Endothelial cell of umbilical vein (primary cell): ENCODE measurements at regions of chr2 and their contacts with region 1.

Region 1: GRCh38 chr2:227238238-227239237 is 74.1 kb downstream of the COL4A3 start:
- DNase-seq: peak; percentile 62
- H3K4me3 ChIP-seq: no peak overlapping the region
- H3K27ac ChIP-seq: no peak overlapping the region
- H3K4me1 ChIP-seq: no peaks in the 10 kb centered on the region
- H3K27me3 ChIP-seq: no peaks in the 10 kb centered on the region
- CTCF ChIP-seq: peak; percentile 86 to 95
- POLR2A ChIP-seq: no peak

Region 2: DNA sequence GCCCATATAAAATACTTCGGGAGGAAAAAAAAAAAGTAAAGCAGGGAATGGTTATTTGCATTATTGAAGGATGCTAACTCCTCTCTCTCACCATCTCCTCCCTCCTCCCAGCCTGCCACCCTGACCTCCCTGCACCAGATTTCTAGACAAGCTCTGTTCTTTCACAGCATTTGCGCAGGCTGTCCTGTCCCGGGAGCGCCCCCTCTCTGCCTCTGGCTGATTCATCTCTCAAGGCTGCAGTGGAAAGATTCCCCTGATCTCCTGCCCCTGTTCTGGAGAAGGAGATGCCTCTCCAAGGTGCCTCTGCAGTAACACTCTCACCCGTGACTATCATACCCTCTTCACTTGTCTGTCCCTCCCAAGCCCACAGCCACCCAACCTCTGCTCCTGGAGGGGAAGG is 113.0 kb before region 1 on chr2:
- CTCF ChIA-PET with region 1: interaction called, 104 read pairs
- POLR2A ChIA-PET with region 1: no interaction called
- dilution Hi-C with region 1: no loop called
- intact Hi-C with region 1: loop called (anchors 1 kb)
- DNase-seq: no peak
- H3K4me3 ChIP-seq: no peak overlapping the region
- H3K27ac ChIP-seq: no peak overlapping the region
- H3K4me1 ChIP-seq: no peaks in the 10 kb centered on the region
- H3K27me3 ChIP-seq: no peaks in the 10 kb centered on the region
- CTCF ChIP-seq: no peak
- POLR2A ChIP-seq: no peak

Region 3: DNA sequence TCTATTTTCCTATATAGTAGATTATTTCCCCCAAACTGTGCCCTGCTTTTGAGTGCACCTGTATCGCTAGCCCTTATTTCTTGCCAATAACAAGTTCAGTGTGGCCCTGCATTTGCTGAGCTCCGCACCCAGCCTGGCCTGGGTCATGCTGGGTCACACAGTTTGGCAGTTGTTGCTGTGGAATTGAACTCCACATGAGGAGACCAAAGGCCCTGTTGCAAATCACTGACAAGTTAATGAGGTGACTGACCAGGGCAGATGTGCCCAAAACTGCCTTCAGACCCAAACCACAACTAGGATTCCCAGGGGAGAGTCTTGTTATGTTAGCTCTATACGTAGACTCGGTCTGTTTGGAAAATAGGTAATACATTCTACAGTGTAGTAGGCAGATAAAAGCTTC is 105.6 kb before region 1 on chr2:
- CTCF ChIA-PET with region 1: interaction called, 104 read pairs
- POLR2A ChIA-PET with region 1: no interaction called
- dilution Hi-C with region 1: no loop called
- intact Hi-C with region 1: loop called (anchors 1 kb)
- DNase-seq: no peak
- H3K4me3 ChIP-seq: no peak overlapping the region
- H3K27ac ChIP-seq: no peak overlapping the region
- H3K4me1 ChIP-seq: no peaks in the 10 kb centered on the region
- H3K27me3 ChIP-seq: no peaks in the 10 kb centered on the region
- CTCF ChIP-seq: no peak
- POLR2A ChIP-seq: no peak

Region 4: GRCh38 chr2:227204452-227204851 is 34.1 kb before region 1 on chr2:
- CTCF ChIA-PET with region 1: no interaction called
- POLR2A ChIA-PET with region 1: no interaction called
- dilution Hi-C with region 1: no loop called
- intact Hi-C with region 1: no loop called
- DNase-seq: no peak
- H3K4me3 ChIP-seq: no peak overlapping the region
- H3K27ac ChIP-seq: no peak overlapping the region
- H3K4me1 ChIP-seq: no peaks in the 10 kb centered on the region
- H3K27me3 ChIP-seq: no peaks in the 10 kb centered on the region
- CTCF ChIP-seq: no peak
- POLR2A ChIP-seq: no peak

Region 5: GRCh38 chr2:227228061-227228667 is 10.4 kb before region 1 on chr2:
- CTCF ChIA-PET with region 1: interaction called, 67 read pairs
- POLR2A ChIA-PET with region 1: no interaction called
- dilution Hi-C with region 1: no loop called
- intact Hi-C with region 1: no loop called
- DNase-seq: no peak
- H3K4me3 ChIP-seq: no peak overlapping the region
- H3K27ac ChIP-seq: no peak overlapping the region
- H3K4me1 ChIP-seq: no peaks in the 10 kb centered on the region
- H3K27me3 ChIP-seq: no peaks in the 10 kb centered on the region
- CTCF ChIP-seq: no peak
- POLR2A ChIP-seq: no peak

Region 6: DNA sequence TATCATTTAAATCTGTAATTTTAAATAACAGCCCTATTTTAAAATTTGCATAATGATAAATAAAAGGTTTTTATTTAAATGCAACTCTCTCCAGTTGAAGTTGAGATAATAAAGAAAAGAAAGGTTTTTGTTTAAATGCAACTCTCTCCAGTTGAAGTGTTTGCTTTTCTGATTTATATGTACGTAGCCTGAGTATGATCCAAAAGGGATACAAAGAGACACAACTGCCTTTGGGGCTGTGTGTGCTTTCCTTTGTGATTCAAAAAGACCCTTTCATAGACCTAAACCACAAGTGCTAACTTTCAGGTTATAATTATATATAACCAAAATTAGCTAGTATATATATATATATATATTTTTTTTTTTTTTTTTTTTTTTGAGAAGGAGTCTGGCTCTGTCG is 10.3 kb after region 1 on chr2:
- CTCF ChIA-PET with region 1: interaction called, 82 read pairs
- POLR2A ChIA-PET with region 1: no interaction called
- dilution Hi-C with region 1: no loop called
- intact Hi-C with region 1: no loop called
- DNase-seq: no peak
- H3K4me3 ChIP-seq: no peak overlapping the region
- H3K27ac ChIP-seq: no peak overlapping the region
- H3K4me1 ChIP-seq: no peaks in the 10 kb centered on the region
- H3K27me3 ChIP-seq: no peaks in the 10 kb centered on the region
- CTCF ChIP-seq: no peak
- POLR2A ChIP-seq: no peak